ENCODE measurements at regions of chr19 and their contacts with region 1.

Region 1: DNA sequence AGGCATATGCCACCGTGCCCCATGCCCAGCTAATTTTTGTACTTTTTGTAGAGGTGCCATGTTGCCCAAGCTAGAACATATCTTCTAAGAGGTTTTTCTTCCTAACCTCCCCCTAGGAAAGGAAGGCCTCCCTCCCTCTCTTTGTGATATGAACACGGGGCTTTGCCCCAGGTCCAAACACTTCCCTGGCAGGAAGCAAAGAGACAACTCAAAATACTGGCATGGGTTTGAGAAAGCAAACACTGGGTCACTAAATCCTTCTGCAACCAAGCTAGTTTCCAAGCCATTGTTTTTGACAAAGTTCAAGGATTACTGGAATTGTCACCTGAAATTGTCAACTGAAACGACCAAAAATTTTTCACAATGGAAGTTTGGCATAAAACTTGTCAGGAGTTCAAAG is 8.8 kb downstream of the CC2D1A start:
- DNase-seq: no peak
- H3K4me3 ChIP-seq: no peak overlapping the region
- H3K27ac ChIP-seq: no peak overlapping the region
- H3K4me1 ChIP-seq: no peaks in the 10 kb centered on the region
- H3K27me3 ChIP-seq: no peaks in the 10 kb centered on the region

Region 2: DNA sequence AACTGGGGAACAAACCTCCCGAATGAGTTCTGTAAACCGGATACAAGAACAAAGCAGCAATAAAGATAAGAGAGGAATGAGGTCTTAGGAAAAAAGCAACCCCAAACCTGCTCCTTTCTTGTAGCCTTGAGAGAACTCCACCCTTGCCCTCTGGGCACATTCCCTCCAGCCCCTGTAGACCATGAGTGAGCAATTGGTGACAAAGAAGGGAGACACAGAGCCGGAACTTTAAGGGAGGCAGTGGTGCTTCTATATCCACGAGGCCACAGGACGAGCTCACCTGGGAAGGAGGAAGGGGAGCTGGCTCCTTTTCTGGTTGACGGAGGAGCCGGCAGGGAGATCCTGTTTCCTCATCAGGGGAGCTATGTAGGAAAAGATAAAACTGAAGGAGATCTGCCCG is 21.9 kb before region 1 on chr19:
- CTCF ChIA-PET with region 1: no interaction called
- POLR2A ChIA-PET with region 1: no interaction called
- DNase-seq: no peak
- H3K4me3 ChIP-seq: no peak overlapping the region
- H3K27ac ChIP-seq: no peak overlapping the region
- H3K4me1 ChIP-seq: peaks cover 0 to 8% (median 4%) of the 10 kb centered on the region in 4 experiments
- H3K27me3 ChIP-seq: no peaks in the 10 kb centered on the region

Region 3: GRCh38 chr19:13932911-13933393 is 18.2 kb after region 1 on chr19:
- CTCF ChIA-PET with region 1: interaction called, 10 read pairs
- POLR2A ChIA-PET with region 1: interaction called, 4 read pairs
- DNase-seq: no peak
- H3K4me3 ChIP-seq: no peak overlapping the region
- H3K27ac ChIP-seq: no peak overlapping the region
- H3K4me1 ChIP-seq: peaks cover 0 to 23% (median 6%) of the 10 kb centered on the region in 4 experiments
- H3K27me3 ChIP-seq: peaks cover 0 to 6% (median 2%) of the 10 kb centered on the region in 5 experiments

Measured in common myeloid progenitor, CD34-positive (primary cell).